GM18951 (cell line): ENCODE measurements at regions of chr17 and their contacts with region 1.

Region 1: DNA sequence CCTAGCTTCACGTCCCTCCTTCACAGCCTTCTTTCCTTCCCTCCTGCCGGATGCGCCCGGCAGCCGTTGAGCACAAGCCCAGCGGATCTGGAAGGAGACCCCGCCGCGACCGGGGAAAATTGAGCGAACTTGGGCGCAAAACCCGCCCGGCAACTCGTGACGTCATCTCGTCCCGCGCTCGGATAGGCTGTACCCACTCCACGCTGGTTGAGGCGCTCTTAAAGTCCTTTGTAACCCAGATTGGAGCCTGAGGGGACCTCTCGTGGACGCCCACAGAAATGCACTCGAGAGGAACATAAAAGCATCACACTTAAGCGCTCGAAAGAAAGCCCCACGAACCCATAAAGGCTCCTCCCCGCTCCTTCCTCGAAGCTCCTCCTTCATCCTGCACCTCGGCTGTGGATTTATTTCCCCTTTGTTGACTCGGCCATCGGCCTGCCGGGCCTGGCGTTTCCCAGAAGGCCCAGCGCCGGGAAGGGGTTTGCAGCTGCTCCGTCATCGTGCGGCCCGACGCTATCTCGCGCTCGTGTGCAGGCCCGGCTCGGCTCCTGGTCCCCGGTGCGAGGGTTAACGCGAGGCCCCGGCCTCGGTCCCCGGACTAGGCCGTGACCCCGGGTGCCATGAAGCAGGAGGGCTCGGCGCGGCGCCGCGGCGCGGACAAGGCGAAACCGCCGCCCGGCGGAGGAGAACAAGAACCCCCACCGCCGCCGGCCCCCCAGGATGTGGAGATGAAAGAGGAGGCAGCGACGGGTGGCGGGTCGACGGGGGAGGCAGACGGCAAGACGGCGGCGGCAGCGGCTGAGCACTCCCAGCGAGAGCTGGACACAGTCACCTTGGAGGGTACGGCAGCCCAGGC is at the start of gene PSMD3:
- POLR2A ChIP-seq: peak; percentile 70

Region 2: DNA sequence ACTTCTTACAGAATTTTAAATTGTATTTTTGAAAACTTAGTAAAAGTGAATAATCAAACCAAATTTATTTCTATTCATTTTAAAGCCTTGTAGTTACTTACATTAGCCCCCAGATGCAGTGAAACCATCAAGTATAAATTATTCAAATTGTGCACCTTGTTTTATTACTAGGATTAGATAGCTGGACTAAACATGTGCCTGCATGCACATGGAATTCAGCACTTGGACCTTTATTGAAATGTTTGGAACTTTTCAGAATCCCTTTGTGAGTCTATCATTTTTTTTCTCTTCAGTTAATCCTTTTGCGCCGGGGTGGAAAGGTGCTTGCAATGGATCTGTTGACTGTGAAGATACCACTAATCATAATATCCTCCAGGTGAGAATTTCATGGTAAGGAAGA is 107.8 kb before region 1 on chr17:
- in situ Hi-C with region 1: loop called (anchors 10 kb)
- POLR2A ChIP-seq: no peak